ENCODE measurements at regions of chr14 and their contacts with region 1.

Region 1: GRCh38 chr14:20493634-20494033 is 11.7 kb upstream of the RNASE10 start:
- H3K4me3 Mint-ChIP-seq: peak overlapping the region; percentile 44
- H3K27ac Mint-ChIP-seq: peak overlapping the region; percentile 83
- H3K4me1 Mint-ChIP-seq: peaks cover 56% of the 10 kb centered on the region
- H3K27me3 Mint-ChIP-seq: no peaks in the 10 kb centered on the region

Region 2: DNA sequence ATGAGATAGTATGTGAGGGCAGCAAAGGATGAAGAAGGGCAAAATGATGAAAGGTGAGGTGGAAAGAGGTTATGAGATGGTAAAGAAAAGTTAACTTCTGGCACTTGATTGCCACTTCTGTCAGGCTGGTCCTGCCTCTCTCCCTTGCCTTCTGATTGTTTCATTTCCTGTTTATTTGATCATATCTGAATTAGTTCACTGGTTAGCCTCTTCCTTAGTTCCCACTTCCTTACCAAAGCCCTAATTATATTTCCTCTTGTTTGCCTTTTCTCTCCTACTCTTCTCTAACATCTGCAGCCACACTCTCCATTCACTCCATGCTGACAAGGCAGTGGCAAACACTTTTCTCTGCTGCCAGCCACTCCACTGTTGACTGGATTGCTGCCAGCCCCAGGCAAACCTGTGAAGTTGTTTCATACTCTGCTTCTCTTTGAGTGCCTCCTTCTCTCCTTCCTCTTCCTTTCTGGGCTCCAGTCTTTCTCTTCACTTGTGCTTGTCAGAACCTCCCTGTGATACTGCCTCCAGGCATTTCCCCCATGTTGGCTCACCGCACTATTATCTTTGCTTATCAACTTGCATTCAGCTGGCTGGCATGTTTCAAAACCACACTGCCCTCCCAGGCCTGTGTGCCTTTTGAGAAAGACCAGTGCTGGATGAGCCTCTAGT is 16.3 kb before region 1 on chr14:
- intact Hi-C with region 1: loop called (anchors 2 kb)
- H3K4me3 Mint-ChIP-seq: no peak overlapping the region
- H3K27ac Mint-ChIP-seq: peak overlapping the region; percentile 68
- H3K4me1 Mint-ChIP-seq: peaks cover 42% of the 10 kb centered on the region
- H3K27me3 Mint-ChIP-seq: no peaks in the 10 kb centered on the region